Cardiac septum (tissue), 1 donor: ENCODE measurements at regions of chr2 and their contacts with region 1.

Region 1: GRCh38 chr2:46887028-46887885 is 28.3 kb downstream of the MCFD2 start:
- DNase-seq: no peak

Region 2: GRCh38 chr2:45993476-45993991 is 893.7 kb before region 1 on chr2:
- intact Hi-C with region 1: loop called (anchors 5 kb)
- DNase-seq: peak; percentile 57

Region 3: DNA sequence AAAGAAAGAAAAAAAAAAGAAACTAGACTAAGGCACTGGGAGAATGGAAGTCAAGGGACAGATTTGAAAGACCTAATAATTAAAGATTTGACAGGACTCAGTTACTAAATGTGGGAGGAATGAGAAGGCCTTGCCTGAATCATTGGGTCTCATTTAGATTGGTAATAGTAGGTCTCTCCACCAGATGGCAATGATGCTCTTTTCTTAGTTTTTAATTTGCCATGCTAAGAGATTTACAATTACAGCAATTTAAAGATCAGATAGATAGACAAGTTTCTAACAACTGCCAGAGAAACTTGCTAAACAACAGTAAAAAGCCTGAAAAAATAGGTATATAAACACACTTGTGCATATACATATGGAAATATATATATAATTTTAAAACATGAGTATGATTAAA is 254.9 kb before region 1 on chr2:
- intact Hi-C with region 1: loop called (anchors 5 kb)
- DNase-seq: no peak

Region 4: DNA sequence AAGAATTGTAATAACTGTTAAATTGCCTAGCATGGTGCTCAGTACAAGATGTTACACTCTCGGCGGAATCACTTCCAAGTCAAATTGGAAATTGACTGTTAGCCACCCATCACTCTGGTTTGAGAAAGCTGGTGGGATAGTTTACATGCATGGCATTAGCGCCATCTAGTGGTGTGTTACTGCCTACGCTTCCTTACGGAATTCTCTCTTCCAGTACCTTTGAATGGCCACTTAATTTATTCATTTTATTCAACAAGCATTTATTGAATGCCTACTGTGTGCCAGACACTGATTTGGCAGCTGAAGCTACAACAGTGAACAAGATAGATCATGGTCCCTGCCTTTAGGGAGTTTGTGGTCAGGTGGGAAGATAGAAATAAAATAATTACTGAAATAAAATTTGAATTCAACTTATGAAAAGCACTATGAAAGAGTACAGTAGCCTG is 236.7 kb before region 1 on chr2:
- intact Hi-C with region 1: loop called (anchors 5 kb)
- DNase-seq: no peak